GM18951 (cell line): ENCODE measurements at regions of chr12 and their contacts with region 1.

Region 1: DNA sequence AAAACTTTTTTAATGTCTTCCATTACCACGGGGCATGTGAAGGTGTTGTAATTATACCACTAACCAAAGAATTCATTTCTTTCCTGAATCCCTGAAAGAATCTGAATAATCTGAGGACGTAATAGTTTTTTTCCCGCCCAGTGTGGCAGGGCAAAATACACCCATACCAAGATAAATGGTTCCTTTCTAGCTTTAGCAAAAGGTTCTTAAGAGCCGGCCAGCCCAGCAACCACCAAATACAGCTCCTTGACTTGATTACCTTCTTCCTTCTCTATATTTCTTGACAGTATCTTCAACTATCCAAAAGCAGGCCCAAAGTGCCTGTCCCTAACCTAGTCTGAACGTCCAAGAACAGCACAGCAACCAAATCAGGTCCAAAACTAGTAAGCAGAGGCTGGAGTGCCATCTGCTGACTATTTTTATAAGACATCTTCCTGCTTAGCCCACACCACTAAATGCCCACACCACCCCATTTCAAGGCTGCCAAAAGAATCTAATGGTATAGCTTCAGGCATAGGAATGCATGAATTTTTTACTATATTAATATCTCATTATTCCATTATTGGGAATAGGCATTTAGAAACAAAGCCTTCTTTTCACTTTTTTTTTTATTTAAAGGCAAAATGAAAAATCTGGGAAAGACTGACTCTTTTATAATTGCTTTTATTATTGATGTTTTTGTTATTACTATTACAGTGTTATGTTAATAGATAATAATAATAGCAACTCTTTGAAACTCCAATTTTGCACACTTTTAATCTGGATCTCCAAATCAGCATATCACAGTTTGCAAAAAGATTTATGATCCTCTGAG is 524.4 kb downstream of the MED13L start:
- POLR2A ChIP-seq: no peak

Region 2: GRCh38 chr12:114662512-114663177 is 1090.5 kb before region 1 on chr12:
- in situ Hi-C with region 1: loop called (anchors 25 kb)
- POLR2A ChIP-seq: no peak

Region 3: GRCh38 chr12:116037941-116038837 is 285.1 kb after region 1 on chr12:
- in situ Hi-C with region 1: no loop called
- POLR2A ChIP-seq: no peak